ENCODE measurements at regions of chr3 and their contacts with region 1.

Region 1: DNA sequence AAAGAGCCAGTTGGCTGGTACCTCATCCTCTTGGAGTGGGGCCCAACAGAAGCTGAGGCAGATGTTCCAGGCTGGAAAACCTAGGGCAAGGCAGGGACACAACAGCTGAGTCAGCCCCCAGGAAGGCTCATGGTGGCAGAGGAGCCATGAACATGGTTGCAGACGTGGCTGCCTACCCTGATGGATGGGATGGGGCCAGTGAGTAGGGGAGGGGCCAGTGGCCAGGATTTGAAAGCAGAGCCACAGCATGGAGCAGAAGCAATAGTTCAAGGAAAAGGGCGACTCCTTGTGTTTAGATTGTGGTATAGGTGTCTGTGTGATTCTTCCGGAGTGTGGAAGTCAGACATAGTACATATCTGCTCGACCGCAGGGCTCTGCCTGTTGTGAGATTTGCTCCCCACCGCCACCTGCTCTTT is 24.2 kb downstream of the PXYLP1 start:
- DNase-seq: peak; percentile 68
- H3K4me3 Mint-ChIP-seq: peak overlapping the region; percentile 3
- H3K27ac Mint-ChIP-seq: no peak overlapping the region
- H3K4me1 Mint-ChIP-seq: peaks cover 25% of the 10 kb centered on the region
- H3K27me3 Mint-ChIP-seq: no peaks in the 10 kb centered on the region

Region 2: DNA sequence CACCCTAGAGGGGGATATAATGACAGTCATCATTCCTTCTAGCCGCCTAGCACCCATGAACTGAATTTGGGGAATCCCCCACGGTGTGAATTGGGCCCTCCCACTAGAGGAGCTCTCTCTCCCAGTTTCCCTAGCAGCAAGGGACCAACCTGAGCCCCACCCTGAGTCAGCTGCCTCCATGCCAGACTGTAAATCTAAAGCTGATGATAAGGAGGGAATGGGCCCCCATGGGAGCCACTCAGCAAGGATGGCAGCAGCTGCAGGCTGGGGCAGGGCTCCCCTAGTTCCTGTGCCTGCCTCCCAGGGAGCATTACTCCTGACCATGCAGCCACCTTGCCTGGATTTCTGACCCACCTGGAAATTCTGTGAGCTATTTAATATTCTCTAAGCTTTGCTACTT is 81.2 kb before region 1 on chr3:
- CTCF ChIA-PET with region 1: no interaction called
- intact Hi-C with region 1: no loop called
- DNase-seq: no peak
- H3K4me3 Mint-ChIP-seq: no peak overlapping the region
- H3K27ac Mint-ChIP-seq: no peak overlapping the region
- H3K4me1 Mint-ChIP-seq: no peaks in the 10 kb centered on the region
- H3K27me3 Mint-ChIP-seq: no peaks in the 10 kb centered on the region

Region 3: DNA sequence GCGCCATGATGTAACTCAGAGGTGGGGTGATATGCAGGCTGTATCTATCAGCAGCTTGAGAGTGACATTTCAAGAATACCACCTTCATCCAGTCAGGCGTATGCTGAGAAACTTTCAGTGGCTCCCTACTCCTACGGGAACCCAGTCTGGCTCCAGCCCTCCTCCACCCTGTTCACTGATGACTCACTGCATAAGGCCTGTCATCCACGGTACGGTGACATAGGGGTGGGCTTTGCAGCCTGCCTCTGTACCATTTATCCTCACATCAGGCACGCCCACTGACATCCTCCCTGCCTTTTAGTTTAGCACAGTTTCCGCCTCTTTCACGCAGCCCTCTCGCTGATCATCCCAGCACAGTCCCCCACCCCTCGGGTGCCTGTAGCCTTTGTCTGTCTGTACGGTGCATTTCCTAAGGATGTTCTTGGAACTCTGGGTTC is 12.6 kb before region 1 on chr3:
- CTCF ChIA-PET with region 1: interaction called, 41 read pairs
- intact Hi-C with region 1: loop called (anchors 1 kb)
- DNase-seq: peak; percentile 86
- H3K4me3 Mint-ChIP-seq: peak overlapping the region; percentile 61
- H3K27ac Mint-ChIP-seq: peak overlapping the region; percentile 59
- H3K4me1 Mint-ChIP-seq: peaks cover 45% of the 10 kb centered on the region
- H3K27me3 Mint-ChIP-seq: no peaks in the 10 kb centered on the region

Region 4: GRCh38 chr3:141279077-141279967 is 23.5 kb after region 1 on chr3:
- CTCF ChIA-PET with region 1: interaction called, 11 read pairs
- intact Hi-C with region 1: no loop called
- DNase-seq: peak; percentile 34
- H3K4me3 Mint-ChIP-seq: no peak overlapping the region
- H3K27ac Mint-ChIP-seq: no peak overlapping the region
- H3K4me1 Mint-ChIP-seq: peaks cover 17% of the 10 kb centered on the region
- H3K27me3 Mint-ChIP-seq: no peaks in the 10 kb centered on the region

Measured in activated naive CD4-positive, alpha-beta T cell treated with anti-CD3 and anti-CD28 coated beads for 36 hours (primary cell).